ENCODE measurements at regions of chr10 and their contacts with region 1.

Region 1: GRCh38 chr10:22704471-22704911 is 9.9 kb downstream of the PIP4K2A start:
- DNase-seq: no peak
- ATAC-seq: peak; percentile 53
- H3K4me3 ChIP-seq: peak overlapping the region; percentile 66; the same call in 1 of the 2 replicates
- H3K27ac ChIP-seq: peak overlapping the region; percentile 76
- H3K4me1 ChIP-seq: peaks cover 65% of the 10 kb centered on the region
- H3K27me3 ChIP-seq: no peaks in the 10 kb centered on the region
- CTCF ChIP-seq: no peak
- EP300 ChIP-seq: no peak
- POLR2A ChIP-seq: no peak
- RAD21 ChIP-seq: 0 out of 2 replicates have a peak, but pooled peaks have one; percentile 9

Region 2: GRCh38 chr10:22676435-22676834 is 28.1 kb before region 1 on chr10:
- CTCF ChIA-PET with region 1: interaction called, 3 read pairs
- POLR2A ChIA-PET with region 1: interaction called, 10 read pairs
- RAD21 ChIA-PET with region 1: interaction called, 16 read pairs
- SMC1A ChIA-PET with region 1: interaction called, 82 read pairs
- in situ Hi-C with region 1: no loop called
- intact Hi-C with region 1: no loop called
- DNase-seq: no peak
- ATAC-seq: no peak; the same call in 2 of the 3 replicates
- H3K4me3 ChIP-seq: no peak overlapping the region
- H3K27ac ChIP-seq: no peak overlapping the region
- H3K4me1 ChIP-seq: peaks cover 8% of the 10 kb centered on the region
- H3K27me3 ChIP-seq: no peaks in the 10 kb centered on the region
- CTCF ChIP-seq: no peak
- EP300 ChIP-seq: no peak
- POLR2A ChIP-seq: no peak
- RAD21 ChIP-seq: no peak

Region 3: GRCh38 chr10:22682237-22683139 is 22.0 kb before region 1 on chr10:
- CTCF ChIA-PET with region 1: interaction called, 5 read pairs
- POLR2A ChIA-PET with region 1: interaction called, 12 read pairs
- RAD21 ChIA-PET with region 1: interaction called, 24 read pairs
- SMC1A ChIA-PET with region 1: interaction called, 82 read pairs
- in situ Hi-C with region 1: no loop called
- intact Hi-C with region 1: no loop called
- DNase-seq: peak; percentile 52
- ATAC-seq: peak; percentile 64
- H3K4me3 ChIP-seq: peak overlapping the region; percentile 45; the same call in 1 of the 2 replicates
- H3K27ac ChIP-seq: peak overlapping the region; percentile 82
- H3K4me1 ChIP-seq: peaks cover 43% of the 10 kb centered on the region
- H3K27me3 ChIP-seq: no peaks in the 10 kb centered on the region
- CTCF ChIP-seq: no peak
- EP300 ChIP-seq: no peak
- POLR2A ChIP-seq: no peak
- RAD21 ChIP-seq: no peak

Region 4: GRCh38 chr10:22693371-22693784 is 11.1 kb before region 1 on chr10:
- CTCF ChIA-PET with region 1: interaction called, 8 read pairs
- POLR2A ChIA-PET with region 1: interaction called, 21 read pairs
- RAD21 ChIA-PET with region 1: interaction called, 14 read pairs
- SMC1A ChIA-PET with region 1: interaction called, 56 read pairs
- in situ Hi-C with region 1: no loop called
- intact Hi-C with region 1: no loop called
- DNase-seq: no peak
- ATAC-seq: peak; percentile 45
- H3K4me3 ChIP-seq: no peak overlapping the region; the same call in 1 of the 2 replicates
- H3K27ac ChIP-seq: peak overlapping the region; percentile 63
- H3K4me1 ChIP-seq: peaks cover 25% of the 10 kb centered on the region
- H3K27me3 ChIP-seq: no peaks in the 10 kb centered on the region
- CTCF ChIP-seq: no peak
- EP300 ChIP-seq: no peak
- POLR2A ChIP-seq: no peak
- RAD21 ChIP-seq: no peak

Region 5: GRCh38 chr10:22978287-22978686 is 273.8 kb after region 1 on chr10:
- CTCF ChIA-PET with region 1: no interaction called
- POLR2A ChIA-PET with region 1: no interaction called
- RAD21 ChIA-PET with region 1: no interaction called
- SMC1A ChIA-PET with region 1: no interaction called
- in situ Hi-C with region 1: no loop called
- intact Hi-C with region 1: no loop called
- DNase-seq: no peak
- ATAC-seq: no peak
- H3K4me3 ChIP-seq: no peak overlapping the region
- H3K27ac ChIP-seq: no peak overlapping the region
- H3K4me1 ChIP-seq: no peaks in the 10 kb centered on the region
- H3K27me3 ChIP-seq: no peaks in the 10 kb centered on the region
- CTCF ChIP-seq: no peak
- EP300 ChIP-seq: no peak
- POLR2A ChIP-seq: no peak
- RAD21 ChIP-seq: no peak

Region 6: GRCh38 chr10:23067939-23068775 is 363.7 kb after region 1 on chr10:
- CTCF ChIA-PET with region 1: no interaction called
- POLR2A ChIA-PET with region 1: no interaction called
- RAD21 ChIA-PET with region 1: no interaction called
- SMC1A ChIA-PET with region 1: no interaction called
- in situ Hi-C with region 1: no loop called
- intact Hi-C with region 1: loop called (anchors 10 kb)
- DNase-seq: peak; percentile 27
- ATAC-seq: peak; percentile 84
- H3K4me3 ChIP-seq: no peak overlapping the region
- H3K27ac ChIP-seq: no peak overlapping the region
- H3K4me1 ChIP-seq: peaks cover 28% of the 10 kb centered on the region
- H3K27me3 ChIP-seq: no peaks in the 10 kb centered on the region
- CTCF ChIP-seq: peak; percentile 79 to 81 (median 80)
- EP300 ChIP-seq: no peak
- POLR2A ChIP-seq: no peak
- RAD21 ChIP-seq: peak; percentile 85